ENCODE measurements at regions of chr1 and their contacts with region 1.

Region 1: DNA sequence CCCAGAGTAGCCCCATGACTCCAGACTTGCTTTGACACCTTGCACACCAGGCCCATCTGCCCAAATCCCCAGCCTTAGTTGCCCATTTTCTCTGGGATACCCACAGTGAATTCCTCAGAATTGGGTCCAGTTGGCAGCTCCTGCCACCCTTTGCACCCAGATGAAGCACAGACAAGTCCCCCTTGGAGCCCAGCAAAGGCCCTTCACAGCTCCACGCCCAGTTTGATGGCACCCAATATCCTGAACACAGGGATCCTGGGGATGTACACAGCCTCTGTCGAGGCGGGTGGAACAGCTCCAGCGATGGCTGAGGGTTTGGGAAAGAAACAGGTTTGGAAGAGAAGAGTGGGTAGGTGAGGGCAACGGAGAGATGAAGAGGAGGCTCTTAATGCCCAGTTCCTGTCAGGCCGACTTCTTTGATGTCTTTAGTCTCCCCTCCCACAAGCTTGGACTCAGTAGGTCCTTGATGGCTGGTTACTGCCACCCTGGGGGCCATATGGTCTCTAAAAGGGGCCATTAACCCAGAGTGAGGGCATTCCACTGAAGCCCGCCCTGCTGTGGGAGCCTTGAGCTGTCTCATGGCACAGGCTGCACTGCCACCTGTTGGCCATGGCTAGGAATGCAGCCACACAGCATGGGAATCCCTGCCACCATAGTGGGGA is 21.7 kb downstream of the TMEM53 start:
- DNase-seq: peak; percentile 57 to 68 (median 64)
- H3K4me3 ChIP-seq: no peak overlapping the region
- H3K4me3 Mint-ChIP-seq: no peak overlapping the region
- H3K27ac ChIP-seq: no peak overlapping the region
- H3K27ac Mint-ChIP-seq: peak overlapping the region; percentile 30 to 64 (median 44)
- H3K4me1 ChIP-seq: no peaks in the 10 kb centered on the region
- H3K4me1 Mint-ChIP-seq: no peaks in the 10 kb centered on the region
- H3K27me3 ChIP-seq: no peaks in the 10 kb centered on the region
- H3K27me3 Mint-ChIP-seq: no peaks in the 10 kb centered on the region

Region 2: DNA sequence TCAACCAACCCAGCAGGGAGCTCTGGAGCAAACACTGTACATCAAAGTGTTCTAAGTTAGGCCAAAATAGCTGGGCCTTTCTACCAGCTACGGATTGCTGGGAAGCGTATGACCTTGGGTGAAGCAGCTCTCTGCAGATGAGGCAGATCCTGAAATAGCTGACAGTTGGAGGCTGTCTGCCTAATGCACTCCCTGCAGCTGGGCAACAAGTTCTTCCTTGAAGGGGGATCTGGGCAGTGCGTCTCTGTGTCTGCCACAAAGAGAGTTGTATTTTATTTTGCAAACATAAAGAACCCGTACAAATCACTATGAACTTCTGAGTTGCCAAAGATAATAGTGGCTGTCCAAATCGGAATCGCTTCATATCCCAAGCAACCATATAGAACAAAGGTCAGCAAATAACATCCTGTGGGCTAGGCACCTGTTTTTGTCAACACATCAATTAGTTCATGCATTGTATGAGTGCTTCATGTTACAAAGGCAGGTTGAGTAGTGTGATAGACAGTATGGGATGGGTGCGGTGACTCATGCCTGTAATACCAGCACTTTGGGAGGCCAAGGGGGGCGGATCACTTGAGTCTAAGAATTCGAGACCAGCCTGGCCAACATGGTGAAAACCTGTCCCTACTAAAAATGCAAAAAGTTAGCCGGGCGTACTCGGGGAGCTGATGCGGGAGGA is 563.1 kb before region 1 on chr1:
- CTCF ChIA-PET with region 1: no interaction called
- POLR2A ChIA-PET with region 1: no interaction called
- intact Hi-C with region 1: loop called (anchors 5 kb)
- DNase-seq: no peak
- H3K4me3 ChIP-seq: no peak overlapping the region
- H3K4me3 Mint-ChIP-seq: no peak overlapping the region
- H3K27ac ChIP-seq: no peak overlapping the region
- H3K27ac Mint-ChIP-seq: no peak overlapping the region
- H3K4me1 ChIP-seq: no peaks in the 10 kb centered on the region
- H3K4me1 Mint-ChIP-seq: peaks cover 0 to 2% (median 0%) of the 10 kb centered on the region in 4 donors
- H3K27me3 ChIP-seq: no peaks in the 10 kb centered on the region
- H3K27me3 Mint-ChIP-seq: peaks cover 20 to 22% of the 10 kb centered on the region in 2 donors

Region 3: GRCh38 chr1:44377925-44378784 is 274.4 kb before region 1 on chr1:
- CTCF ChIA-PET with region 1: interaction called, 55 read pairs
- POLR2A ChIA-PET with region 1: interaction called, 7 read pairs
- intact Hi-C with region 1: no loop called
- DNase-seq: peak; percentile 17 to 44 (median 22)
- H3K4me3 ChIP-seq: no peak overlapping the region
- H3K4me3 Mint-ChIP-seq: no peak overlapping the region
- H3K27ac ChIP-seq: no peak overlapping the region
- H3K27ac Mint-ChIP-seq: no peak overlapping the region
- H3K4me1 ChIP-seq: no peaks in the 10 kb centered on the region
- H3K4me1 Mint-ChIP-seq: no peaks in the 10 kb centered on the region
- H3K27me3 ChIP-seq: no peaks in the 10 kb centered on the region
- H3K27me3 Mint-ChIP-seq: peaks cover 0 to 7% of the 10 kb centered on the region in 2 donors

Region 4: GRCh38 chr1:44594871-44595746 is 57.5 kb before region 1 on chr1:
- CTCF ChIA-PET with region 1: interaction called, 21 read pairs
- POLR2A ChIA-PET with region 1: no interaction called
- intact Hi-C with region 1: no loop called
- DNase-seq: peak; percentile 51 to 64 (median 57)
- H3K4me3 ChIP-seq: no peak overlapping the region
- H3K4me3 Mint-ChIP-seq: no peak overlapping the region
- H3K27ac ChIP-seq: no peak overlapping the region
- H3K27ac Mint-ChIP-seq: no peak overlapping the region
- H3K4me1 ChIP-seq: no peaks in the 10 kb centered on the region
- H3K4me1 Mint-ChIP-seq: no peaks in the 10 kb centered on the region
- H3K27me3 ChIP-seq: peaks cover 3% of the 10 kb centered on the region
- H3K27me3 Mint-ChIP-seq: peaks cover 7 to 8% of the 10 kb centered on the region in 2 donors

Region 5: GRCh38 chr1:44631647-44632539 is 20.7 kb before region 1 on chr1:
- CTCF ChIA-PET with region 1: interaction called, 45 read pairs
- POLR2A ChIA-PET with region 1: interaction called, 20 read pairs
- intact Hi-C with region 1: loop called (anchors 2 kb)
- DNase-seq: peak; percentile 86 to 92 (median 88)
- H3K4me3 ChIP-seq: peak overlapping the region; percentile 38 to 65
- H3K4me3 Mint-ChIP-seq: peak overlapping the region; percentile 91 to 97 (median 93)
- H3K27ac ChIP-seq: peak overlapping the region; percentile 85
- H3K27ac Mint-ChIP-seq: peak overlapping the region; percentile 96 to 99 (median 97)
- H3K4me1 ChIP-seq: peaks cover 35% of the 10 kb centered on the region
- H3K4me1 Mint-ChIP-seq: peaks cover 27 to 50% (median 33%) of the 10 kb centered on the region in 4 donors
- H3K27me3 ChIP-seq: no peaks in the 10 kb centered on the region
- H3K27me3 Mint-ChIP-seq: no peaks in the 10 kb centered on the region

Region 6: GRCh38 chr1:44674113-44675000 is 21.8 kb after region 1 on chr1 and contains the starts of genes ARMH1 and TMEM53:
- CTCF ChIA-PET with region 1: interaction called, 14 read pairs
- POLR2A ChIA-PET with region 1: interaction called, 15 read pairs
- intact Hi-C with region 1: no loop called
- DNase-seq: peak; percentile 96 to 98 (median 97)
- H3K4me3 ChIP-seq: peak within 1 kb of the TSS; percentile 62 to 95
- H3K4me3 Mint-ChIP-seq: peak within 1 kb of the TSS; percentile 89 to 95 (median 90)
- H3K27ac ChIP-seq: peak within 1 kb of the TSS; percentile 74
- H3K27ac Mint-ChIP-seq: peak within 1 kb of the TSS; percentile 87 to 94 (median 93)
- H3K4me1 ChIP-seq: peaks cover 25% of the 10 kb centered on the region
- H3K4me1 Mint-ChIP-seq: peaks cover 11 to 31% (median 23%) of the 10 kb centered on the region in 4 donors
- H3K27me3 ChIP-seq: no peaks in the 10 kb centered on the region
- H3K27me3 Mint-ChIP-seq: no peaks in the 10 kb centered on the region
- total RNA-seq, gene ARMH1: 64.0 to 74.5 TPM
- total RNA-seq, gene TMEM53: 1.7 to 2.2 TPM

Region 7: GRCh38 chr1:44947063-44947773 is 294.6 kb after region 1 on chr1:
- CTCF ChIA-PET with region 1: no interaction called
- POLR2A ChIA-PET with region 1: no interaction called
- intact Hi-C with region 1: no loop called
- DNase-seq: no peak
- H3K4me3 ChIP-seq: no peak overlapping the region
- H3K4me3 Mint-ChIP-seq: no peak overlapping the region
- H3K27ac ChIP-seq: no peak overlapping the region
- H3K27ac Mint-ChIP-seq: peak overlapping the region in 2 of 7 donors; percentile 6 to 39
- H3K4me1 ChIP-seq: peaks cover 12% of the 10 kb centered on the region
- H3K4me1 Mint-ChIP-seq: peaks cover 8 to 15% (median 12%) of the 10 kb centered on the region in 4 donors
- H3K27me3 ChIP-seq: no peaks in the 10 kb centered on the region
- H3K27me3 Mint-ChIP-seq: no peaks in the 10 kb centered on the region

Measured in CD4-positive, alpha-beta memory T cell (primary cell).